IMR-90 (cell line): ENCODE measurements at regions of chr1 and their contacts with region 1.

Region 1: GRCh38 chr1:44425341-44426082 is 20.5 kb downstream of the RNF220 start:
- DNase-seq: no peak
- ATAC-seq: no peak
- H3K4me3 ChIP-seq: no peak overlapping the region
- H3K27ac ChIP-seq: no peak overlapping the region
- H3K4me1 ChIP-seq: no peaks in the 10 kb centered on the region
- H3K27me3 ChIP-seq: peaks cover 74% of the 10 kb centered on the region
- CTCF ChIP-seq: no peak
- POLR2A ChIP-seq: no peak
- RAD21 ChIP-seq: no peak

Region 2: DNA sequence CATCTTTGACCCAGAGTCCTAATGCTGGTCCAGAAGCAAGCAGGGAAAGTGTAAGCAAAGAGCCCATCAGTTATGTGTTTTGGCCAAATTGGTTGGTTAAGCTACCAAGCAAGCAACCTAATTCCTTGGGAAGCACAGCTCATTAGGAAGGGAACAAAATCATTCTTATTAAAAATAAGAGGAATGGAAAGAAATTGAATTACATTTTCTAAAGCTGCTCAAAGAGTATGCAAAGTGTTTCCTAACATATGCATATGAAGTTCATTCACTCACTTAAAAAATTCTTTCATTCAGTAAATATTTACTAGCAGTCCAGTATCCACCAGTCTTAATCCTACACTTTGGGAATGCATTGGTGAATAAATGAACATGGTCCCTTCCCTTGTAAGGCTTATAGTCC is 51.4 kb after region 1 on chr1:
- CTCF ChIA-PET with region 1: no interaction called
- POLR2A ChIA-PET with region 1: no interaction called
- dilution Hi-C with region 1: no loop called
- in situ Hi-C with region 1: no loop called
- intact Hi-C with region 1: loop called (anchors 5 kb)
- DNase-seq: no peak
- ATAC-seq: no peak
- H3K4me3 ChIP-seq: no peak overlapping the region
- H3K27ac ChIP-seq: no peak overlapping the region
- H3K4me1 ChIP-seq: no peaks in the 10 kb centered on the region
- H3K27me3 ChIP-seq: peaks cover 14% of the 10 kb centered on the region
- CTCF ChIP-seq: no peak
- POLR2A ChIP-seq: no peak
- RAD21 ChIP-seq: no peak